SK-N-SH (cell line): ENCODE measurements at regions of chr7 and their contacts with region 1.

Region 1: GRCh38 chr7:42914421-42915045 is 2.7 kb upstream of the C7orf25 start:
- DNase-seq: no peak
- H3K4me3 ChIP-seq: no peak overlapping the region
- H3K27ac ChIP-seq: peak overlapping the region in 1 of 2 experiments; percentile 60; a peak in 2 of 4 replicates
- H3K4me1 ChIP-seq: peaks cover 0 to 16% of the 10 kb centered on the region in 2 experiments; a peak in 2 of 4 replicates
- H3K27me3 ChIP-seq: no peaks in the 10 kb centered on the region
- CTCF ChIP-seq: no peak
- EP300 ChIP-seq: no peak
- RAD21 ChIP-seq: no peak

Region 2: DNA sequence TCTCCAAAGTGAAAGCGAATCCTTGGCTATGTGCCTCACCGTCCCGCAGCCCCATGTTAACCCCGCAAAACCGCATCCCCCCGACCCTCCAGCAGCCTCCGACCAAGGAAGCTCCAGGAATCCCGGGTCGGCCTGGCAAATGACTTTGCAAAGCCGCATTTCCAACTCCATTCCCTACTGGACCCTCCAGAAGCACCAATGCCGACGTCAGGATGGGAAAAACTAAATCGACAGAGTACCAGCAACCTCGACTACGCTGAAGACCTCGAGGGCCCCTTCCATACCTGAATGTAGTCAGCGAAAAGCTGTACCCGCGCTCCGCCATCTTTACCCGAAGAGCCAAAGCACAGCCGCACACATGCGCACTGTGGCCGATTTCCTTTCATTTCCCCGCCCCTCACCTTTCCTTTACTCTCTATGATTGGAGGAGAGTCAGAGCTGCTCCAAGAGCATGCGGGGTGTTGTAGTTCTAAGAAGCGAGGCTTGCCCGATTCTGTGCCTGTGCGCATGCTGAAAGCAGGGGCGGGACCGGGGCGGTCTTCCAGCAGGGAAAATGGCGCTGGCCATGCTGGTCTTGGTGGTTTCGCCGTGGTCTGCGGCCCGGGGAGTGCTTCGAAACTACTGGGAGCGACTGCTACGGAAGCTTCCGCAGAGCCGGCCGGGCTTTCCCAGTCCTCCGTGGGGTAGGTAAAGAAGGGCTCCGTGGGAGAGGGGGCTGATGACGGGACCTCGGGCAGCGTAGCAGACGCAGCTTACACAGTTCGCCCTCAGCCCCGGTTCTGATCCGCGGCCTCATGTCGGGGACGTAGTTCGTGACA is 17.5 kb after region 1 on chr7 and contains the starts of genes MRPL32 and PSMA2:
- CTCF ChIA-PET with region 1: interaction called, 15 read pairs
- POLR2A ChIA-PET with region 1: interaction called, 8 read pairs
- DNase-seq: peak; percentile 95
- H3K4me3 ChIP-seq: peak within 1 kb of the TSS; percentile 97 to 99
- H3K27ac ChIP-seq: peak within 1 kb of the TSS; percentile 71 to 80
- H3K4me1 ChIP-seq: peaks cover 0 to 19% of the 10 kb centered on the region in 2 experiments; a peak in 2 of 4 replicates
- H3K27me3 ChIP-seq: no peaks in the 10 kb centered on the region
- CTCF ChIP-seq: no peak
- EP300 ChIP-seq: no peak
- RAD21 ChIP-seq: no peak
- polyA plus RNA-seq, gene MRPL32: 73.1 and 87.5 TPM in 2 replicates
- polyA plus RNA-seq, gene PSMA2: 101 and 132 TPM in 2 replicates

Region 3: GRCh38 chr7:43038254-43038653 is 123.7 kb after region 1 on chr7:
- CTCF ChIA-PET with region 1: no interaction called
- POLR2A ChIA-PET with region 1: no interaction called
- DNase-seq: no peak
- H3K4me3 ChIP-seq: no peak overlapping the region
- H3K27ac ChIP-seq: peak overlapping the region in 1 of 2 experiments; percentile 44; a peak in 2 of 4 replicates
- H3K4me1 ChIP-seq: peaks cover 0 to 10% of the 10 kb centered on the region in 2 experiments; a peak in 1 of 4 replicates
- H3K27me3 ChIP-seq: no peaks in the 10 kb centered on the region
- CTCF ChIP-seq: no peak
- EP300 ChIP-seq: peak in 1 of 2 experiments; percentile 47; a peak in 1 of 4 replicates
- RAD21 ChIP-seq: no peak